ENCODE measurements at regions of chr17 and their contacts with region 1.

Region 1: GRCh38 chr17:82153745-82154375 is 55.8 kb upstream of the FASN start:
- DNase-seq: peak; percentile 87 to 90
- H3K4me3 ChIP-seq: no peak overlapping the region
- H3K27ac ChIP-seq: no peak overlapping the region
- H3K4me1 ChIP-seq: peaks cover 0 to 3% of the 10 kb centered on the region in 2 donors
- H3K27me3 ChIP-seq: no peaks in the 10 kb centered on the region
- CTCF ChIP-seq: peak; percentile 76 to 99 (median 94)
- POLR2A ChIP-seq: no peak

Region 2: DNA sequence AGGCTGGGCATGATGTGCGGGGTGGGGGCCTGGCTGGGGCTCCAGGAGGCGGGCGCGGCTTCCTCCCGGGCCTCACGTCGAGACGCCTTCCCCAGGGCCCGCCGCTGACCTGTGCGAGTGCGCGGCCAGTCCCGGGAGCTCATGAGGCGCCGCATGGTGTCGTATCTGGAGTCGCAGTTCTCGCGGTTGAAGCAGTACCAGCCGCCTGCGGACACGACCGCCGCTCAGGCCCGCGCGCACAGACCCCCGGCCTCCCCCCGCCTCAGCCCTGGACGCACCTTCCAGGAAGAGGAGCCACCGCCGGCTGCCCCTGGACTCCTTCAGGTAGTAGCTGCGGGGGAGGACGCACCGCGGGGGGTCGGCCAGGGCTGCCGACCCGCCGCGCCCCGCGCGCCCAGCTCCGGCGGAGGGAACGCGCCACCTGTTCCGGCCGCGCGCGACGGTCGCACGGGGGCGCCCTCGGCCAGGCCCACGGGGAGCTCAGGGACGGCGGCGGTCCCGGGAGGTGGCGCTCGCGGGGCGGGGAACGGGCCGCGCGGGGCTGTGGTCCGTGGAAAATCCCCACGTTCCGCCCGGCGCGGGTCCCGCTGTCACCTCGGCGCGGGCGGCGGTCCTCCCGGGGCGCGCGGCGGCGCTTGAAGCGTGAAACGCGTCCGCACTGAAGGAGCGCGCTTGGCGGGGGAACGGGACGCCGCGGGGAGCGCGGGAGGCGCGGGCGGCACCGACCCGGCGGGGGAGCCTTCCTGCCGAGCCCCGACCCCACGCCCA is 194.3 kb before region 1 on chr17:
- intact Hi-C with region 1: loop called (anchors 5 kb)
- DNase-seq: peak; percentile 64 to 73
- H3K4me3 ChIP-seq: peak overlapping the region in 1 of 3 donors; percentile 24
- H3K27ac ChIP-seq: no peak overlapping the region
- H3K4me1 ChIP-seq: peaks cover 6 to 23% of the 10 kb centered on the region in 2 donors
- H3K27me3 ChIP-seq: peaks cover 25% of the 10 kb centered on the region
- CTCF ChIP-seq: peak in 4 of 6 experiments; percentile 50 to 99 (median 98)
- POLR2A ChIP-seq: no peak

Region 3: DNA sequence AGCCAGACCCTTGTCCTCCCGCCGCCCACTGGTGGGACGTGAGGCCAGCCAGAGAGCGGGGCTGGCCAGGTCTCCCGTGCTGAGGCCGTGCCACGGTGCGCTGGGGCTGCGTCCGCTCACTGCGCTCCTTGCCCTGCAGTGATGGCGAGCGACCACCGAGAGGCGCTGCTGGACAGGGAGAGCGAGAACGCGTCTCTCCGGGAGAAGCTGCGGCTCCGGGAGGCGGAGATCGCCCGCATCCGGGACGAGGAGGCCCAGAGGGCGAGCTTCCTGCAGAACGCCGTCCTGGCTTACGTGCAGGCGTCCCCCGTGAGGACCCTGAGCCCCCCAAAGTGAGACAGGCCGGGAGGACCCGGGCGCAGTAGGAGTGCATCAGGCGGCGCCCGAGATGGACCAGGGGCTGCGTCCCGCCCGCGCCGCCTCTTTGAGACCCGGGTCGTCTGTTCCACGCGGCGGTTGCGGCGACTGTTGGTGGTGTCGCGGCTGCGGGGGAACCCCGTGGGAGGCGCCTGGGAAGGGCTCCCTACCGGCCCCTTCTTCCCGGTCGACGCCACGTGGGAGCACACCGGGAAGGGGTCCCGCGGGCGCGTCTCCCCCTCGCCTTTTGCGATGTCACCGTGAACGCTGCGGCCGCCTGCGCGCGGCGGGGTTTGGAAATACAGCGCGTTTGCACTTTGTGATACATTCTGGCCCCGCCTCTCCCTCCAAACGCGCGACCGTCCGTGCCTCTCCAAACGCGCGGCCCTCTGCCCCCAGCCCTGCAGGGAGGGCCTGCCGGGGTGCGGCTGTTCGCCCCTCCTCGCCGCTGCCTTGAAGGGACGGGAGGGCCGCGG is 123.2 kb before region 1 on chr17:
- intact Hi-C with region 1: loop called (anchors 2 kb)
- DNase-seq: peak; percentile 83 to 85
- H3K4me3 ChIP-seq: peak overlapping the region in 1 of 3 donors; percentile 36
- H3K27ac ChIP-seq: peak overlapping the region in 1 of 3 donors; percentile 41
- H3K4me1 ChIP-seq: peaks cover 28 to 39% of the 10 kb centered on the region in 2 donors
- H3K27me3 ChIP-seq: no peaks in the 10 kb centered on the region
- CTCF ChIP-seq: peak; percentile 75 to 98 (median 94)
- POLR2A ChIP-seq: no peak

Region 4: GRCh38 chr17:82103553-82104451 is 50.1 kb before region 1 on chr17:
- intact Hi-C with region 1: loop called (anchors 5 kb)
- DNase-seq: peak; percentile 95 to 97
- H3K4me3 ChIP-seq: no peak overlapping the region
- H3K27ac ChIP-seq: peak overlapping the region; percentile 85 to 97 (median 86)
- H3K4me1 ChIP-seq: peaks cover 45 to 76% of the 10 kb centered on the region in 2 donors
- H3K27me3 ChIP-seq: no peaks in the 10 kb centered on the region
- CTCF ChIP-seq: no peak
- POLR2A ChIP-seq: peak in 1 of 2 donors; percentile 53

Region 5: GRCh38 chr17:82205719-82206508 is 52.1 kb after region 1 on chr17:
- intact Hi-C with region 1: no loop called
- DNase-seq: peak; percentile 85 to 88
- H3K4me3 ChIP-seq: no peak overlapping the region
- H3K27ac ChIP-seq: peak overlapping the region; percentile 67 to 86 (median 85)
- H3K4me1 ChIP-seq: peaks cover 4 to 11% of the 10 kb centered on the region in 2 donors
- H3K27me3 ChIP-seq: no peaks in the 10 kb centered on the region
- CTCF ChIP-seq: peak; percentile 69 to 95 (median 92)
- POLR2A ChIP-seq: peak in 1 of 2 donors; percentile 42

Measured in thyroid gland (tissue), 4 donors.